ENCODE measurements at regions of chr5 and their contacts with region 1.

Region 1: GRCh38 chr5:87069974-87070624 is 197.6 kb upstream of the RASA1 start:
- DNase-seq: peak; percentile 77
- ATAC-seq: peak; percentile 92
- H3K4me3 ChIP-seq: no peak overlapping the region
- H3K27ac ChIP-seq: no peak overlapping the region
- H3K4me1 ChIP-seq: no peaks in the 10 kb centered on the region
- H3K27me3 ChIP-seq: no peaks in the 10 kb centered on the region
- CTCF ChIP-seq: peak; percentile 74
- POLR2A ChIP-seq: no peak
- RAD21 ChIP-seq: peak; percentile 91

Region 2: GRCh38 chr5:86837610-86838009 is 232.5 kb before region 1 on chr5:
- CTCF ChIA-PET with region 1: no interaction called
- POLR2A ChIA-PET with region 1: no interaction called
- dilution Hi-C with region 1: no loop called
- in situ Hi-C with region 1: no loop called
- intact Hi-C with region 1: no loop called
- DNase-seq: peak; percentile 20
- ATAC-seq: no peak
- H3K4me3 ChIP-seq: no peak overlapping the region
- H3K27ac ChIP-seq: no peak overlapping the region
- H3K4me1 ChIP-seq: no peaks in the 10 kb centered on the region
- H3K27me3 ChIP-seq: no peaks in the 10 kb centered on the region
- CTCF ChIP-seq: no peak
- POLR2A ChIP-seq: no peak
- RAD21 ChIP-seq: no peak

Region 3: DNA sequence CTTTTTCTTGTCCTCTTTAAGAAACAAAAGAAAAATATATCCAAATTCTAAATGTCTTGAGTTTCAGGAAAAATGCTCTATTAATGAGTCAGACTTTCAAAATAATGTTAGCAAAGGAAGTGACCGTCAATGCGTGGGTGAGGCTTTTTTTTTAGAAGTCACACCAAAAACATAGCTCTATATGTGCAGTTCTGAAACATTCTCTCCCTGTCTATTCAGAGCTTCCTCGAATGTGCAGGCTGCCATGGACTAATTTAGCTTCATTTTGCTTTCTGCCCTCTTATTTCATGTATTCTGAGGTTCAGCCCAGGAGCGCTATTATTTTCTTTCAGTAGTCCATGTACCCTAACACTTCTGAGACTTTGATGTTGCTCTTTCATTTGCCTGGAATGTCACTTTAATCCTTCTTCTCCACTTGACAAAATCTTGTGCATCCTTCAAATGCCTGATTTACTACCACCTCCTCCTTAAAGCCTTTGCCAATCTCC is 125.0 kb after region 1 on chr5:
- CTCF ChIA-PET with region 1: no interaction called
- POLR2A ChIA-PET with region 1: no interaction called
- dilution Hi-C with region 1: no loop called
- in situ Hi-C with region 1: no loop called
- intact Hi-C with region 1: loop called (anchors 5 kb)
- DNase-seq: peak; percentile 85
- ATAC-seq: peak; percentile 86
- H3K4me3 ChIP-seq: no peak overlapping the region
- H3K27ac ChIP-seq: peak overlapping the region; percentile 8; the same call in 1 of the 2 replicates
- H3K4me1 ChIP-seq: peaks cover 16% of the 10 kb centered on the region
- H3K27me3 ChIP-seq: no peaks in the 10 kb centered on the region
- CTCF ChIP-seq: no peak
- POLR2A ChIP-seq: no peak
- RAD21 ChIP-seq: no peak

Region 4: GRCh38 chr5:87267574-87268125 is 197.6 kb after region 1 on chr5 and contains the start of gene RASA1:
- CTCF ChIA-PET with region 1: interaction called, 15 read pairs
- POLR2A ChIA-PET with region 1: no interaction called
- dilution Hi-C with region 1: no loop called
- in situ Hi-C with region 1: no loop called
- intact Hi-C with region 1: loop called (anchors 1 kb)
- DNase-seq: peak; percentile 87
- ATAC-seq: peak; percentile 90
- H3K4me3 ChIP-seq: peak within 1 kb of the TSS; percentile 90
- H3K27ac ChIP-seq: peak within 1 kb of the TSS; percentile 98
- H3K4me1 ChIP-seq: no peaks in the 10 kb centered on the region; the same call in 1 of the 2 replicates
- H3K27me3 ChIP-seq: no peaks in the 10 kb centered on the region
- CTCF ChIP-seq: no peak
- POLR2A ChIP-seq: peak; percentile 80
- RAD21 ChIP-seq: no peak
- total RNA-seq, gene RASA1: 45.7 and 55.8 TPM in 2 replicates

Region 5: DNA sequence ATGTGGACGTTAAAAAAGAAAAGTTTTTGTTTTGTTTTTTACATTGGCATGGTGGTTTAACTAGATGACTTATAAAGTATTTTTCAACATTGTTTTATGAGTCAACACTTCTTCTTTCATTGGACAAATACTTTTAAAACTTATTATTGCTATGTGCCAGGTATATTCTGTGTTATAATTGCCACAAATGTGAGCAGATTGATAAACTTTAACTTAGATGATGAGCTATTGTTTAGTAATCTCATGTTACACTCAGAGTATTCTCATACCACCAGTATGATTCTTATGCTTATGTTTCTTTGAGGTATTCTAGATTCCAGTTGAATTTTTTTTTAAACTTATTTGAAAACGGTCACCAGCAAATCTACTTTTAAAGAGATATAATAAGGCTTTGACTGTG is 257.9 kb after region 1 on chr5:
- CTCF ChIA-PET with region 1: interaction called, 3 read pairs
- POLR2A ChIA-PET with region 1: no interaction called
- dilution Hi-C with region 1: no loop called
- in situ Hi-C with region 1: no loop called
- intact Hi-C with region 1: loop called (anchors 2 kb)
- DNase-seq: peak; percentile 50
- ATAC-seq: peak; percentile 68
- H3K4me3 ChIP-seq: no peak overlapping the region
- H3K27ac ChIP-seq: no peak overlapping the region
- H3K4me1 ChIP-seq: peaks cover 12% of the 10 kb centered on the region; the same call in 1 of the 2 replicates
- H3K27me3 ChIP-seq: no peaks in the 10 kb centered on the region
- CTCF ChIP-seq: no peak
- POLR2A ChIP-seq: no peak
- RAD21 ChIP-seq: no peak

Region 6: DNA sequence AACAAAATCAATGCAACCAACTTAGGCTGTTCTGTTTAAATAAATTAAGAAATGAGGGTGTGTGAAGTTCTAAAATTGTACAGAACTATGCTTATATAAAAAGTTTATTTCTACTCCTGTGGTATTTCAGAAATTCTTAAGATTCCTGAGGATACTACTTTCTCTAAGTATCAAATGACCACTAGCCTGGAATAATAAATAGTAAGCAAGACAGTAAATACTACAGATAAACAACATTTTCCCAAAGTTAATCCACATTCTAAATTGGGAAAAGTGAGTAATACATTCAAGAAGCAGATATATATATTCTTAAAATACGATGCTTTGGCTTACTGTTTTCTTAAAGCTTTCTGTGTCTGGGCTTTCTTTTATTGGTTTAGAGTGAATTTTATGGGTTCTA is 313.1 kb after region 1 on chr5:
- CTCF ChIA-PET with region 1: no interaction called
- POLR2A ChIA-PET with region 1: no interaction called
- dilution Hi-C with region 1: no loop called
- in situ Hi-C with region 1: no loop called
- intact Hi-C with region 1: loop called (anchors 5 kb)
- DNase-seq: peak; percentile 82
- ATAC-seq: peak; percentile 95
- H3K4me3 ChIP-seq: no peak overlapping the region
- H3K27ac ChIP-seq: no peak overlapping the region
- H3K4me1 ChIP-seq: peaks cover 5% of the 10 kb centered on the region
- H3K27me3 ChIP-seq: no peaks in the 10 kb centered on the region
- CTCF ChIP-seq: no peak
- POLR2A ChIP-seq: no peak
- RAD21 ChIP-seq: no peak

Region 7: GRCh38 chr5:87400305-87400899 is 330.3 kb after region 1 on chr5:
- CTCF ChIA-PET with region 1: interaction called, 8 read pairs
- POLR2A ChIA-PET with region 1: no interaction called
- dilution Hi-C with region 1: no loop called
- in situ Hi-C with region 1: loop called (anchors 5 kb)
- intact Hi-C with region 1: loop called (anchors 1 kb)
- DNase-seq: peak; percentile 61
- ATAC-seq: peak; percentile 82
- H3K4me3 ChIP-seq: no peak overlapping the region
- H3K27ac ChIP-seq: no peak overlapping the region
- H3K4me1 ChIP-seq: peaks cover 3% of the 10 kb centered on the region
- H3K27me3 ChIP-seq: no peaks in the 10 kb centered on the region
- CTCF ChIP-seq: peak; percentile 65
- POLR2A ChIP-seq: no peak
- RAD21 ChIP-seq: peak; percentile 60

Measured in IMR-90 (cell line).